Activated naive CD4-positive, alpha-beta T cell treated with anti-CD3 and anti-CD28 coated beads for 36 hours (primary cell): ENCODE measurements at regions of chr15 and their contacts with region 1.

Region 1: DNA sequence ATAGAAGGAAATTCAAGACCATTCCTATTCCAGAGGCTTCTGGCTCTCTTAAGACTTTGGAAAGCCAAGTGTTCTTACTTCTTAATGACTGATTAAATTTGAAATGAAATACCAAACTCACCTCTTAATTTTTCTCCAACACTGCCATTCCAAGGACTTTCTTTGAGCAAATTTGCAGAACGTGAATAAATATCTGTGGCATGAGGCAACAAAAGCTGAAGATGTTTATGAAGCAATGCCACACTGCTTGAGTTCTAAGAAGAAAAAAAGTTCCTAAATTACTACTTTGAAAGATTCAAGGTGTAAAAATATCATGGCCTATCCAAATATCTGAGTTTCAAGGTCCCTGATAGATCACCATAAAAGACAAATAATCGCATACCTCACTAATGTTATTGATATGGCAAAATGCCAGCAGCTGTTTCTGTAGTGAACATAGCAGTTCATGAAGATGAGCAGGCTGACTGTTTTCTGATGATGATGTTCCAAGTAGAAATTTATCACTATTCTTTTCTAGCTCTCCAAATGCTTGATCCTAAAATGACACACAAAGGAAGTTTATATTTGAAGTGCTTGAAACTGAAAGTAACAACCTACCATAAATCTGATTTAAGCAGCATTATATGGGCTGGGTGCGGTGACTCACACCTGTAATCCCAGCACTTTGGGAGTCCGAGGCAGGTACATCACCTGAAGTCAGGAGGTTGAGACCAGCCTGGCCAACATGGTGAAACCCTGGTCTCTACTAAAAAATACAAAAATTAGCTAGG is 104.4 kb downstream of the HERC1 start:
- DNase-seq: peak; percentile 70
- H3K4me3 Mint-ChIP-seq: no peak overlapping the region
- H3K27ac Mint-ChIP-seq: peak overlapping the region; percentile 16
- H3K4me1 Mint-ChIP-seq: peaks cover 19% of the 10 kb centered on the region
- H3K27me3 Mint-ChIP-seq: no peaks in the 10 kb centered on the region

Region 2: GRCh38 chr15:63539521-63539920 is 189.8 kb before region 1 on chr15:
- CTCF ChIA-PET with region 1: no interaction called
- intact Hi-C with region 1: no loop called
- DNase-seq: no peak
- H3K4me3 Mint-ChIP-seq: no peak overlapping the region
- H3K27ac Mint-ChIP-seq: no peak overlapping the region
- H3K4me1 Mint-ChIP-seq: peaks cover 64% of the 10 kb centered on the region
- H3K27me3 Mint-ChIP-seq: no peaks in the 10 kb centered on the region

Region 3: GRCh38 chr15:63668601-63669000 is 60.7 kb before region 1 on chr15:
- CTCF ChIA-PET with region 1: no interaction called
- intact Hi-C with region 1: loop called (anchors 2 kb)
- DNase-seq: no peak
- H3K4me3 Mint-ChIP-seq: peak overlapping the region; percentile 57
- H3K27ac Mint-ChIP-seq: peak overlapping the region; percentile 83
- H3K4me1 Mint-ChIP-seq: peaks cover 57% of the 10 kb centered on the region
- H3K27me3 Mint-ChIP-seq: no peaks in the 10 kb centered on the region

Region 4: GRCh38 chr15:63922261-63922904 is 193.1 kb after region 1 on chr15:
- CTCF ChIA-PET with region 1: no interaction called
- intact Hi-C with region 1: no loop called
- DNase-seq: no peak
- H3K4me3 Mint-ChIP-seq: no peak overlapping the region
- H3K27ac Mint-ChIP-seq: no peak overlapping the region
- H3K4me1 Mint-ChIP-seq: peaks cover 17% of the 10 kb centered on the region
- H3K27me3 Mint-ChIP-seq: no peaks in the 10 kb centered on the region

Region 5: DNA sequence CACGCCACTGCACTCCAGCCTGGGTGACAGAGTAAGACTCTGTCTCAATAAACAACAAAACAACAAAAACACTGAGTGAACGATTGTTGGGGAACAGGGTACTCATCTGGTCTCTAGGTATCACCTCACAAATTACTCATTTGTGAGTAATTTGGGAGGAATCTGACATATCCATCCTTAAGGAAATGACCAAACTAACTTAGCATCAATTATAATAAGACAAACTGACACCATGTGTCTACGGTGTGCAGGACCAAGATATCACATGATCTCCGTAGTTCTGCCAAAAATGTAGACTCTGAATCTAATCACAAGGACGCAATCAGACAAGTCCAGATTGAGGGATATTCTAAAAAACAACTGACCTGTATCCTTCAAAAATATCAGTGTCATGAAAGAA is 329.0 kb after region 1 on chr15:
- CTCF ChIA-PET with region 1: no interaction called
- intact Hi-C with region 1: no loop called
- DNase-seq: no peak
- H3K4me3 Mint-ChIP-seq: no peak overlapping the region
- H3K27ac Mint-ChIP-seq: no peak overlapping the region
- H3K4me1 Mint-ChIP-seq: no peaks in the 10 kb centered on the region
- H3K27me3 Mint-ChIP-seq: no peaks in the 10 kb centered on the region